Activated CD8-positive, alpha-beta T cell treated with anti-CD3 and anti-CD28 coated beads, Interleukin-2, amount 10 ng/mL, durations not matched to agents 7 days and 5 days (primary cell): ENCODE measurements at regions of chr5 and their contacts with region 1.

Region 1: DNA sequence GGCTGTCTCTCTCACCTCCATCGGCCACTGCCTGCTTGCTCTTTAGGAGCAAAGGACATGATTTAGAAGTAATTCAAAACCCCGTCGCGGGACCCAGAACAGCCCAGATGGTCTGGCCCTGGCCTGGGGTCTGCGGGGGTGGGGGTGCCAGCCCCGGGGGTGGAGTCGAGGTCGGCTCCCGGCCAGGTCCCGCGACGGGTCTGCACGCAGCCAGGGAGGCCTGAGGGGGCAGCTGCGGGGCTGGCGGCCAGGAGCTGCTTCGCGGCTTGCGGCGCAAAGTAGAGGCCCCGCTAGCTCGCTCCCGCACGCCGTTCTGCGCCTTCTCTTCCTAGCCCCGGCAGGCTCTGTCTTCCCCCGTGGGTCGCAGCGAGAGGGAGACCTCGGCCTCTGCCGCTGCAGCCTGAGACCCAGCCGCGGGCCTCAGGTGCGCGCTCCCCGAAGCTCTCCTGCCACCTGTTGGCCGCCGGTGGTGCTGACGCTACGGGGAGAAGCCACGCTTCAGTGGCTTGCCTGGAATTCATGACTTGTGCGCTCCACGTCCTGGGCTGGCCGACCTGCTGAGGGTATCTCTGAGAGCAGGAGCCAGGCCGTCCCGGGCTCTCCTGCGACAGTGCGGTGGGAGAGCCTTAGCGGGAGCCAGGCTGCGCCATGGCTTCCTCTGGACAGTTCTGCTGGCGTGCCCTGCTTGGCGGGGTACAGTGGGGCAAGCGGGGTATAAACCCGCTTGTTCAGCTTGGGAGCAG is 157.2 kb upstream of the PITX1 start:
- DNase-seq: peak; percentile 79
- ATAC-seq: peak; percentile 98
- H3K4me3 Mint-ChIP-seq: peak overlapping the region; percentile 68
- H3K27ac Mint-ChIP-seq: no peak overlapping the region
- H3K4me1 Mint-ChIP-seq: peaks cover 7% of the 10 kb centered on the region
- H3K27me3 Mint-ChIP-seq: peaks cover 64% of the 10 kb centered on the region

Region 2: GRCh38 chr5:135203593-135204036 is 12.4 kb after region 1 on chr5:
- CTCF ChIA-PET with region 1: interaction called, 17 read pairs
- POLR2A ChIA-PET with region 1: no interaction called
- DNase-seq: no peak
- ATAC-seq: no peak
- H3K4me3 Mint-ChIP-seq: no peak overlapping the region
- H3K27ac Mint-ChIP-seq: no peak overlapping the region
- H3K4me1 Mint-ChIP-seq: no peaks in the 10 kb centered on the region
- H3K27me3 Mint-ChIP-seq: peaks cover 46% of the 10 kb centered on the region

Region 3: GRCh38 chr5:135353952-135354721 is 162.9 kb after region 1 on chr5:
- CTCF ChIA-PET with region 1: no interaction called
- POLR2A ChIA-PET with region 1: no interaction called
- DNase-seq: no peak
- ATAC-seq: no peak
- H3K4me3 Mint-ChIP-seq: no peak overlapping the region
- H3K27ac Mint-ChIP-seq: no peak overlapping the region
- H3K4me1 Mint-ChIP-seq: peaks cover 3% of the 10 kb centered on the region
- H3K27me3 Mint-ChIP-seq: no peaks in the 10 kb centered on the region